Activated B cell treated with CpG ODN at 0.5 μM for 24 hours (primary cell): ENCODE measurements at regions of chr2 and their contacts with region 1.

Region 1: DNA sequence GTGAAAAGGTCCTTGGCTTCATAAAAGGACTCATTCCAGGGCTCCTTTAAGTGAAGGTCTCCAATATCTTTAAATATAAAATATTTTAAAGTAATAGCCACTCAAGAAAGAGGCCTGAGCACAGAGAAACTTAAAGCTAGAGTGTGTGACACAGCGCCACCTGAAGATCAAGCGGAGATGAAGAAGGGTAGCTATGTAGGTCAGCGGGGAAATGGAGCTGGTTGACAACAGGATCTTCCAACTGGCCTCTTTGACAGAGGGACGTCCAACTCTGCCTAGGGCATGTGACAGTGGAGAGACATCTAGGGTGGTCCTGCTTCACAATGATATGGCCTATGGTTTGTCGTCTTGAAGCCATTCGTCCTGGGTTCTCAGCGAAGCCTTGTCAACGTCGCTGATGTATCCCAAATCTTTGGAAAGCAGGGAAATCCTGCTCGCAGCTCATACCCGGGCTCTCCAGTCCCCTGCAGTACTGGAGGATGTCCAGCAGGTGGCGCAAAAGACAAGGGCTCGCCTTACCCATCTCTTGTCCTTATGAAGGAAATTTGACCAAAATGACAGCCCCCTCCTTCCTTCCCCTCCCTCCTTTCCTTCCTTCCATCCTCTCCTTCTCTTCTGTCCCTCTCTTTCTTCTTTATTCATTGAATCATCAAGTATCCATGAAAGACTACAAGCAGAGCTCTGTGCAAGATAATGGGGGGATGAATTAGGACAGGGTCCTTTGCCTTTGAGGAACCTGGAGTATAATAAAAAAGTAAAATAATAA is 59.6 kb downstream of the LONRF2 start:
- DNase-seq: peak; percentile 51
- ATAC-seq: peak; percentile 76
- H3K4me3 Mint-ChIP-seq: no peak overlapping the region
- H3K27ac Mint-ChIP-seq: no peak overlapping the region
- H3K4me1 Mint-ChIP-seq: peaks cover 8% of the 10 kb centered on the region
- H3K27me3 Mint-ChIP-seq: no peaks in the 10 kb centered on the region
- CTCF ChIP-seq: peak; percentile 92

Region 2: DNA sequence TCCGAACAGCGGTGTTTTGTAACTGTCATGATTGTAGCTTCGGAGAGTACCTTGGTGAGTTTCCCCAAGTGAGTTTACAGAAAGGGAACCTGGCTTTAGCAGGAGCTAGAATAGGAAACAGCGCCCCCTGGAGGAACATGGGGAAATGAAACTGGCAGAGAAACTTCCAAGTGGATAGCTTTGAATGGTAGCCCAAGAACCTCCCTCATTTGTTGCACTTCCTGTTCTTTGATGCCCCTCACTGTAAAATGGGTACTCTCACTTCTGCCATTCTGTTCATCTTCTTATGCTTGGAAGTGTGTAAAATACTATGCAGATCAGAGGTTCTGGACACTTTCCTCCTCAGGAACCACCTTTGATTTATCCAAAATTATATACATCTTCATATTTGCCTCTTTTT is 118.5 kb after region 1 on chr2:
- CTCF ChIA-PET with region 1: interaction called, 80 read pairs
- POLR2A ChIA-PET with region 1: interaction called, 4 read pairs
- intact Hi-C with region 1: loop called (anchors 1 kb)
- DNase-seq: peak; percentile 71
- ATAC-seq: peak; percentile 97
- H3K4me3 Mint-ChIP-seq: no peak overlapping the region
- H3K27ac Mint-ChIP-seq: peak overlapping the region; percentile 31
- H3K4me1 Mint-ChIP-seq: peaks cover 8% of the 10 kb centered on the region
- H3K27me3 Mint-ChIP-seq: no peaks in the 10 kb centered on the region
- CTCF ChIP-seq: no peak

Region 3: DNA sequence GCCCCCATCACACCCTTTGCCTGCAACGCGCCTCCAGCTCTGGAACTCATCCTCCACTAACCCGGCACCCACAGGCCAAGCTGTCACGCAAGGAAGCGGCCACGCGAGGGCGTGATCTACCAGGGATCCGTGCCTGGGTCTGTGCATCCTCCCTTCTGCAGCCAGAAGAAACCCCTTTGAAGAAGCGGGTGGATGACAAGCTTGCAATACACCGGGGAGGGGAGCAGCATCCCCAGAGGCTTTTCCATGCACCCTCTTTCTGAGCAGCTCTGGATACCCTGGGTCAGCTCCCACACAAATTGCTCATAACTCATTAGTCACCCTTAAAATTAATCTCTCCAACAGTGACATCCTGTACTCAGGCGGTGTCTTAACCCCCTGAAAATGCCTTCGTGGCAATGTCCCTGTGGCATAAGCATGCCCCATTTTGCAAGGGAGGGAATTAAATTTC is 347.7 kb after region 1 on chr2:
- CTCF ChIA-PET with region 1: interaction called, 8 read pairs
- POLR2A ChIA-PET with region 1: no interaction called
- intact Hi-C with region 1: loop called (anchors 2 kb)
- DNase-seq: peak; percentile 25
- ATAC-seq: peak; percentile 58
- H3K4me3 Mint-ChIP-seq: no peak overlapping the region
- H3K27ac Mint-ChIP-seq: no peak overlapping the region
- H3K4me1 Mint-ChIP-seq: peaks cover 2% of the 10 kb centered on the region
- H3K27me3 Mint-ChIP-seq: peaks cover 24% of the 10 kb centered on the region
- CTCF ChIP-seq: no peak

Region 4: GRCh38 chr2:100984892-100985379 is 722.2 kb after region 1 on chr2:
- CTCF ChIA-PET with region 1: interaction called, 9 read pairs
- POLR2A ChIA-PET with region 1: no interaction called
- intact Hi-C with region 1: loop called (anchors 1 kb)
- DNase-seq: peak; percentile 61
- ATAC-seq: peak; percentile 88
- H3K4me3 Mint-ChIP-seq: no peak overlapping the region
- H3K27ac Mint-ChIP-seq: no peak overlapping the region
- H3K4me1 Mint-ChIP-seq: no peaks in the 10 kb centered on the region
- H3K27me3 Mint-ChIP-seq: peaks cover 8% of the 10 kb centered on the region
- CTCF ChIP-seq: peak; percentile 76